ENCODE measurements at regions of chr1 and their contacts with region 1.

Region 1: GRCh38 chr1:226697151-226697939 is 41.7 kb downstream of the ITPKB start:
- DNase-seq: peak; percentile 69
- H3K4me3 Mint-ChIP-seq: peak overlapping the region; percentile 28
- H3K27ac Mint-ChIP-seq: peak overlapping the region; percentile 96
- H3K4me1 Mint-ChIP-seq: peaks cover 93% of the 10 kb centered on the region
- H3K27me3 Mint-ChIP-seq: no peaks in the 10 kb centered on the region

Region 2: DNA sequence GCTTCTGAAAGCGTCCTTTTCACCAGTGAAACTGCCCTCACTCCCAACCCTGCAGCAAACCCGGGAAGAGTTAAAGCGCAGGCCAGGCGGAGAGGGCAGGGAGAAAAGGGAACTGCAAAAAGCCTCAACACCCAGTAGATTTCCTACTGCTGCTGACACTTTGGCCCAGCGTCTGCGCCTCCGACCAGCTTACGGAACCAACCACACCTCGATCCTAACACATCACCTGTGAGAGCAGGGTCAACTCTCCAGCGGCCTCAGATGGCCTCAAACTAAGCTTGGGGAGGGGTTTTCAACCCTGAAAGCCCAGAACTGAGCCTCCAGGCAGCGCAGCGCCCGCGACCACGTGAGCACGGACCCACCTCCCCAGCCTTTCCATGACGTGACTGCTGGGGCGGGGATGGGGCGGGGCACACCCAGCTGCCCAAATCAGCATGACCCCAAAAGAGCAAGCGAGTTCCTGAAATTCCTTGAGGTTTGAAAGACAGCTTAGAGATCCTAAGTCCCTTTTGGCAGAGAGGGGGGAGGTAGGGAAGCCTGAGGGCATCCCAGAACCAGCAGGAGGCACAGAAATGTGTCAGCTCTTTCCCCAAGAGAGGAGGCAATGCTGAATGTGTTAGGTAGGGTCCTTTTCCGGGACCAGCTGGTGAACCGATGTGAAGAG is 17.4 kb before region 1 on chr1:
- CTCF ChIA-PET with region 1: interaction called, 9 read pairs
- intact Hi-C with region 1: loop called (anchors 1 kb)
- DNase-seq: peak; percentile 84
- H3K4me3 Mint-ChIP-seq: peak overlapping the region; percentile 67
- H3K27ac Mint-ChIP-seq: peak overlapping the region; percentile 92
- H3K4me1 Mint-ChIP-seq: peaks cover 96% of the 10 kb centered on the region
- H3K27me3 Mint-ChIP-seq: no peaks in the 10 kb centered on the region

Region 3: DNA sequence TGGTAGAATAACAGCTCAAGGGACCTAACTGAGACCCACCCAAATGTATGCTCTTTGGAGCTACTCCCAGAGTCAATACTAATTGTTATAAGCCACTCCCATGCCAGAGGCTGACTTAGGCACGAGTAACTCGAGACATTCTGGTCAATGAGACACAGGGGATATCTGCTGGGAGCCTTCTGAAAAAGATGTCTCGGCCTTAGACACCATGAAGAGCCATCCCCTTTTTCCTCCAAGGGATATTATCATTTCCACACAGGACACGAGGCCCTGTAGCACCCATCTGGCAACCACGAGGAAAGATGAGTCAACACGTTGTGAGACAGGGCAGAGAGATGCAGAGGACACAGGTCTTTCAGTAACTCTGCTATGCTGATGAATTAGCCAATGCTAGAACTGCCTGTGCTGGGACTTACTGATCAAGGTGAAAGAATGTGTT is 11.0 kb after region 1 on chr1:
- CTCF ChIA-PET with region 1: interaction called, 6 read pairs
- intact Hi-C with region 1: loop called (anchors 1 kb)
- DNase-seq: peak; percentile 66
- H3K4me3 Mint-ChIP-seq: peak overlapping the region; percentile 71
- H3K27ac Mint-ChIP-seq: peak overlapping the region; percentile 99
- H3K4me1 Mint-ChIP-seq: peaks cover 90% of the 10 kb centered on the region
- H3K27me3 Mint-ChIP-seq: no peaks in the 10 kb centered on the region

Region 4: GRCh38 chr1:226723657-226724532 is 26.6 kb after region 1 on chr1:
- CTCF ChIA-PET with region 1: interaction called, 4 read pairs
- intact Hi-C with region 1: loop called (anchors 1 kb)
- DNase-seq: peak; percentile 51
- H3K4me3 Mint-ChIP-seq: peak overlapping the region; percentile 86
- H3K27ac Mint-ChIP-seq: peak overlapping the region; percentile 98
- H3K4me1 Mint-ChIP-seq: peaks cover 92% of the 10 kb centered on the region
- H3K27me3 Mint-ChIP-seq: no peaks in the 10 kb centered on the region

Region 5: DNA sequence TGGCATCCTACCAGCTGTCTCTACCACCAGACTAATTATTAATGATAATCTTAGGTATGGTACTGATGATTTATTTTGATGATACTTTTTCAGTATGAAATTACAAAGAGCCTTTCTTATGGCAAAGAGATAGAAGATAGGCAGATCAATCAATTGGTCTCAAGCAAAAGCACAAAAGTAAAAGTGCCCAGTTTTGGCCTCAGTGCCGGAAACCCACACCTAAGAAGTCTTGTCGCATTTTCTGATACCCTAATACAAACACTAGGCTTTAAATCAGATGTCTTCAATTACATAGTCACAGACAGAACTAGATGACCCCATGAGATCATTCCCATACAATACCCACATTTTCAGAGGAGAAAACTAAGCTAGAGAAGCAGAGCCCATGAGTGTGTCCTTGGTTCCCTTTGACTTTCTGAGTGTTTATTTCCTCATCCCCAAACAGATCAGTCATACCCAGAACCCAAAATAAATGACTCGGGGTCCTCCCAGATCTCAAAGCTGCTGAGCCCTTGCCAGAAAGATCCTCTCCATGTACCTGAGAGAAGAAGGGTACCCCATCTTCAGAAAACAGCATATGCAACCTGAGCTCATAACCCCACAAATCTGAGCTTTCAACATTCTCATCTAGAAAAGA is 34.0 kb after region 1 on chr1:
- CTCF ChIA-PET with region 1: interaction called, 4 read pairs
- intact Hi-C with region 1: loop called (anchors 1 kb)
- DNase-seq: peak; percentile 47
- H3K4me3 Mint-ChIP-seq: peak overlapping the region; percentile 77
- H3K27ac Mint-ChIP-seq: peak overlapping the region; percentile 98
- H3K4me1 Mint-ChIP-seq: peaks cover 74% of the 10 kb centered on the region
- H3K27me3 Mint-ChIP-seq: no peaks in the 10 kb centered on the region

Measured in activated naive CD4-positive, alpha-beta T cell treated with anti-CD3 and anti-CD28 coated beads for 36 hours (primary cell).